ENCODE measurements at regions of chr12 and their contacts with region 1.

Region 1: GRCh38 chr12:11015775-11016430 is 6.5 kb downstream of the TAS2R19 start:
- DNase-seq: no peak
- H3K4me3 ChIP-seq: no peak overlapping the region
- H3K27ac ChIP-seq: peak overlapping the region in 48 of 59 donors; percentile 30 to 94 (median 80)
- H3K27me3 ChIP-seq: no peaks in the 10 kb centered on the region
- CTCF ChIP-seq: no peak

Region 2: GRCh38 chr12:10802587-10802986 is 213.3 kb before region 1 on chr12 and contains the start of gene TAS2R7:
- intact Hi-C with region 1: no loop called
- DNase-seq: no peak
- H3K4me3 ChIP-seq: no peak within 1 kb of the TSS
- H3K27ac ChIP-seq: no peak within 1 kb of the TSS
- H3K27me3 ChIP-seq: peaks cover 0 to 9% (median 0%) of the 10 kb centered on the region in 45 donors
- CTCF ChIP-seq: no peak
- total RNA-seq, gene TAS2R7: 0.42 to 4.5 (median 1.1) TPM in 108 of 120 experiments, not detected in the others

Region 3: DNA sequence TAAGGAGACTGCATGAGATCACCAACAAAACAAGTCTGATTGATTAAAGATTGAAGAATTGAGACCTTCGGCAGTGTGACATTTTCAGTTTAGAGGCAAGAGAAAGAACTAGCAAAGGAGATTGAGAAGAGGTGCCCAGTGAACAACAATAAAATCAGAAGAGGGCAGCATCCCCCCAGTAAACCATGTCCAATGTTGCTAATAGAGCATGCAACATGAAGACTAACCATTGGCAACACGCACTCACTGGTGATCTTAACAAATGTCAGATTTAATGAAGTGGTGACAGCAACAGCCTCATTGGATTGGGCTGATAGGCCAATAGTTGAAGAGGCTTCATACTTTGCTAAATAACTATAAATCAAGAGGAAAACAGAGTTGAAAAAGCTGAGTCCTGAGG is 56.1 kb before region 1 on chr12:
- intact Hi-C with region 1: no loop called
- DNase-seq: peak in 2 of 10 donors; percentile 26 to 33
- H3K4me3 ChIP-seq: no peak overlapping the region
- H3K27ac ChIP-seq: peak overlapping the region in 2 of 59 donors; percentile 0 to 16
- H3K27me3 ChIP-seq: no peaks in the 10 kb centered on the region
- CTCF ChIP-seq: peak in 50 of 56 donors; percentile 18 to 77 (median 47)

Region 4: DNA sequence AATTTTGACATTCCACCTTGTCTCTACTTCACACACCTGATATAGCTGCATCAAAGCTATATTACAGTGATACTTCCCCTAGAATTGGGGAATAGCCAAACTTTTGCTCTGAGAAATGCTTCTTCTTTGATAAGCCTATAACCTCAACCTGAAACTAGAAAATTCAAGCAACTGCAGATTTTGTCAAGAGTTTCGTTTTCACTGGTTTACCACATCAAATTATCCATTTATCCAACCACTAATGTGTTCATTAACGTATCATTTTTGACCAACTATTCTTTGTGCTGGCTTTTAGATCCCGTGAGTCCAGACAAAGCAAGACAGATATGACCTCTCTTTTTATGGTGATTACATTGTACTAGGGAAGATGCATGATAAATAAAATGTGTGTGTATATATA is 59.7 kb after region 1 on chr12:
- intact Hi-C with region 1: loop called in 1 of 2 experiments (anchors 2 kb)
- DNase-seq: no peak
- H3K4me3 ChIP-seq: no peak overlapping the region
- H3K27ac ChIP-seq: no peak overlapping the region
- H3K27me3 ChIP-seq: no peaks in the 10 kb centered on the region
- CTCF ChIP-seq: no peak

Measured in dorsolateral prefrontal cortex (tissue), 120 donors.